Activated CD4-positive, alpha-beta T cell treated with anti-CD3 and anti-CD28 coated beads for 36 hours (primary cell): ENCODE measurements at regions of chrX and their contacts with region 1.

Region 1: GRCh38 chrX:78555401-78555980 is 103.6 kb downstream of the RTL3 start:
- DNase-seq: no peak
- ATAC-seq: no peak
- H3K4me3 Mint-ChIP-seq: no peak overlapping the region
- H3K27ac Mint-ChIP-seq: no peak overlapping the region
- H3K4me1 Mint-ChIP-seq: peaks cover 2% of the 10 kb centered on the region
- H3K27me3 Mint-ChIP-seq: no peaks in the 10 kb centered on the region

Region 2: GRCh38 chrX:77628294-77629025 is 927.0 kb before region 1 on chrX:
- CTCF ChIA-PET with region 1: no interaction called
- POLR2A ChIA-PET with region 1: no interaction called
- intact Hi-C with region 1: no loop called
- DNase-seq: no peak
- ATAC-seq: no peak
- H3K4me3 Mint-ChIP-seq: no peak overlapping the region
- H3K27ac Mint-ChIP-seq: no peak overlapping the region
- H3K4me1 Mint-ChIP-seq: peaks cover 9% of the 10 kb centered on the region
- H3K27me3 Mint-ChIP-seq: no peaks in the 10 kb centered on the region

Region 3: DNA sequence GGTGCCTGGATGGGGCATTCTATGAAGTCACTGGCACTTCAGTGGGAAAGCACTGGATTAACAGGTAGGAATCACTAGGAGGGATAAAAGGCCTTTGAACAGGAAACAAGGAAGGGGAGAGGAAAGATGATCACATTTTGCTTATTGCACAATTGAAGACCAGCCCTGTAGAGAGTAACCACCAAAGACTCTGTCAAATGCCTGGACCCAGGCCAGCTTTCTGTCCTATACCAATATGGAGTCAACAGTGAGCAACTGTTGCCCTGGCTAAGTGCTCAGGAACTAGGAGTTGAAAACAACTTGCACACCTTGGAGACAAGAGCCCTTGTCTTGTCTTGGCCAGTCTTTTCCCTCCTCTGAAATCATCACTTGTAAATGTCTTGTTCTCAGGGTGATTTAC is 117.8 kb after region 1 on chrX:
- CTCF ChIA-PET with region 1: no interaction called
- POLR2A ChIA-PET with region 1: no interaction called
- intact Hi-C with region 1: no loop called
- DNase-seq: no peak
- ATAC-seq: no peak
- H3K4me3 Mint-ChIP-seq: no peak overlapping the region
- H3K27ac Mint-ChIP-seq: no peak overlapping the region
- H3K4me1 Mint-ChIP-seq: no peaks in the 10 kb centered on the region
- H3K27me3 Mint-ChIP-seq: no peaks in the 10 kb centered on the region

Region 4: GRCh38 chrX:78886550-78886949 is 331.1 kb after region 1 on chrX:
- CTCF ChIA-PET with region 1: no interaction called
- POLR2A ChIA-PET with region 1: no interaction called
- intact Hi-C with region 1: loop called (anchors 1 to 5 kb)
- DNase-seq: no peak
- ATAC-seq: peak; percentile 61
- H3K4me3 Mint-ChIP-seq: no peak overlapping the region
- H3K27ac Mint-ChIP-seq: peak overlapping the region; percentile 47
- H3K4me1 Mint-ChIP-seq: peaks cover 7% of the 10 kb centered on the region
- H3K27me3 Mint-ChIP-seq: no peaks in the 10 kb centered on the region

Region 5: DNA sequence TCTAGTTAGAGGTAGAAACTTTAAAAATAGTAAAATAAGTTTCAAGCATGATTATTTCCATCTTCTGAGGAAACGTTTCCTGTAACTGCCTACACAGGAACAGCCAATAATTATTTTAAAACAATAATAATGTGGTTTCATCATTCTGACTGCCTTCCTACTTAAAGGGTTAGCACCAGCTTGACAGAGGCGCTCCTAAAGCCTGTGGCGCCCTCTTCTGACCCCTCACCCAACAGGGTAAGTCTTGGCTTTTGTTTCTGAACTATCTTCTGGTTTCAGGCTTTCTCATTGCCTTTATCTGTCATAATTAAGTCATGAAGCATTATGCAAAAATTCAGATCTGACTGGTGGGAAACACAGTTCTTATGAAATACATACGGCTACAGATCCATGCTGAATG is 714.9 kb after region 1 on chrX:
- CTCF ChIA-PET with region 1: no interaction called
- POLR2A ChIA-PET with region 1: no interaction called
- intact Hi-C with region 1: loop called in 1 of 2 experiments (anchors 10 kb)
- DNase-seq: peak; percentile 87
- ATAC-seq: peak; percentile 99
- H3K4me3 Mint-ChIP-seq: no peak overlapping the region
- H3K27ac Mint-ChIP-seq: peak overlapping the region; percentile 47
- H3K4me1 Mint-ChIP-seq: peaks cover 44% of the 10 kb centered on the region
- H3K27me3 Mint-ChIP-seq: no peaks in the 10 kb centered on the region

Region 6: GRCh38 chrX:79452881-79453280 is 897.4 kb after region 1 on chrX:
- CTCF ChIA-PET with region 1: interaction called, 4 read pairs
- POLR2A ChIA-PET with region 1: no interaction called
- intact Hi-C with region 1: loop called in 1 of 2 experiments (anchors 10 kb)
- DNase-seq: no peak
- ATAC-seq: no peak
- H3K4me3 Mint-ChIP-seq: no peak overlapping the region
- H3K27ac Mint-ChIP-seq: no peak overlapping the region
- H3K4me1 Mint-ChIP-seq: no peaks in the 10 kb centered on the region
- H3K27me3 Mint-ChIP-seq: no peaks in the 10 kb centered on the region